Ovary (tissue), 10 donors: ENCODE measurements at regions of chr3 and their contacts with region 1.

Region 1: GRCh38 chr3:160754855-160755747 is 930 bp upstream of the PPM1L start:
- DNase-seq: peak; percentile 92 to 95 (median 92)
- H3K4me3 ChIP-seq: peak overlapping the region; percentile 59
- H3K27ac ChIP-seq: peak overlapping the region; percentile 79 to 90
- H3K4me1 ChIP-seq: peaks cover 6% of the 10 kb centered on the region
- H3K27me3 ChIP-seq: no peaks in the 10 kb centered on the region
- CTCF ChIP-seq: no peak
- EP300 ChIP-seq: no peak
- POLR2A ChIP-seq: peak; percentile 48

Region 2: DNA sequence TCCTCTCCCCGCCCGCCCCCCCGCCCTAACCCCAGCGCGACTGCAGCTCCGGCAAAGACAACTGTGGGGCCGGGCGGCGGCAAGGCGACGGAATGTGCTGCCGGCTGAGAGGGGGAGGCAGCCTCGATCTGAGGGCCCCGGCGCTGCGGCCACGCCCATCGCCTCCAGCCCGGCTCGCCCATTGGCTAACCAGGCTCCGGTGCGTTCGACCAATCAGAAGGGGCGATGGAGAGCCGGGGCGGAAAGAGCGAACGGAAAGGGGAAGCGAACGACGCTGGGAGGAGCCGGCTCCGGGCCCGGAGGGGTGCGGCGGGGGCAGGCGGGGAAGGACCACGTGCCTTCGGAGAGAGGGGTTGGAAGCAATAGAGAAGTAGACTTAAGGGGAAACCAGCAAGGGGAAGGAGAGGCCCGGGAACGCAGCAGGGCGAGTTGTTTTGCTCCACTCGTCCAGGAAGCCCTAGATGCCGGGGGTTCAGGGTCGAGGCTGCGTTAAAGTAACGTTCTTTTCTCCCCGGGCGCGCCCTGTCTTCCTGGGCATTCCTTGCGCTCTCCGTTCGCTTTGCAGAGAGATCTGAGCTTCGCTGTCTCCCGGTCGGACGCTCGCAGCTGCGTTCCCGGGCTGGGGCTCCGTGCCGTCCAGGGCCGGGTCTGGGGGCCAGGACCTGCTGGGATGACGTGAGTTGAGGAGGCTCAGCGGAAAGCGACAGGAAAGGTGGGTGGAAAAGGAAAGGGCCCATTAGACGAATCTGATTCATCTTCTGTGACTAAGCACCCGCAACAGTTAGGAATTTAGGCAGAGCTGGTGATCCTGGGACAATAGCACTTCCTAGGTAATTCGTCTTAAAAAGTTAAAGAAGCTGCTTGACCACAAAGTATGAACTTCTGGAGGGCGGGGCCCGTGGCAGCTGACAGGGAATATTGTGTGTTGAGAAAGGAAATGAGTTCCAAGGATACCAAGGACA is 189.4 kb before region 1 on chr3 and contains the start of gene KPNA4:
- intact Hi-C with region 1: loop called in 2 of 4 experiments (anchors 10 kb)
- DNase-seq: peak; percentile 96 to 98 (median 97)
- H3K4me3 ChIP-seq: peak within 1 kb of the TSS; percentile 79
- H3K27ac ChIP-seq: peak within 1 kb of the TSS; percentile 87 to 93
- H3K4me1 ChIP-seq: peaks cover 4% of the 10 kb centered on the region
- H3K27me3 ChIP-seq: no peaks in the 10 kb centered on the region
- CTCF ChIP-seq: no peak
- EP300 ChIP-seq: no peak
- POLR2A ChIP-seq: peak; percentile 46
- total RNA-seq, gene KPNA4: 16.2 to 64.0 (median 50.7) TPM